Pancreas (tissue), 10 donors: ENCODE measurements at regions of chr6 and their contacts with region 1.

Region 1: GRCh38 chr6:89242574-89243330 is 25.6 kb upstream of the GABRR1 start:
- DNase-seq: peak in 1 of 6 donors; percentile 32
- ATAC-seq: peak; percentile 53 to 84 (median 76)
- H3K4me3 ChIP-seq: no peak overlapping the region
- H3K27ac ChIP-seq: no peak overlapping the region
- H3K4me1 ChIP-seq: no peaks in the 10 kb centered on the region
- H3K27me3 ChIP-seq: no peaks in the 10 kb centered on the region
- CTCF ChIP-seq: peak in 1 of 4 donors; percentile 19

Region 2: GRCh38 chr6:88989215-88989614 is 253.5 kb before region 1 on chr6:
- intact Hi-C with region 1: loop called in 2 of 3 experiments (anchors 5 kb)
- DNase-seq: peak in 3 of 6 donors; percentile 40 to 74 (median 55)
- ATAC-seq: peak; percentile 89 to 99 (median 94)
- H3K4me3 ChIP-seq: no peak overlapping the region
- H3K27ac ChIP-seq: no peak overlapping the region
- H3K4me1 ChIP-seq: peaks cover 0 to 3% (median 0%) of the 10 kb centered on the region in 3 donors
- H3K27me3 ChIP-seq: no peaks in the 10 kb centered on the region
- CTCF ChIP-seq: no peak

Region 3: GRCh38 chr6:89117211-89118108 is 125.3 kb before region 1 on chr6 and contains the start of gene SRSF12:
- intact Hi-C with region 1: loop called in 1 of 3 experiments (anchors 10 kb)
- DNase-seq: peak; percentile 18 to 82 (median 44)
- ATAC-seq: peak; percentile 81 to 89 (median 86)
- H3K4me3 ChIP-seq: peak within 1 kb of the TSS; percentile 31 to 75 (median 56)
- H3K27ac ChIP-seq: peak within 1 kb of the TSS in 2 of 4 donors; percentile 47 to 53
- H3K4me1 ChIP-seq: no peaks in the 10 kb centered on the region
- H3K27me3 ChIP-seq: no peaks in the 10 kb centered on the region
- CTCF ChIP-seq: no peak
- total RNA-seq, gene SRSF12: 0.37 to 1.6 (median 0.55) TPM

Region 4: DNA sequence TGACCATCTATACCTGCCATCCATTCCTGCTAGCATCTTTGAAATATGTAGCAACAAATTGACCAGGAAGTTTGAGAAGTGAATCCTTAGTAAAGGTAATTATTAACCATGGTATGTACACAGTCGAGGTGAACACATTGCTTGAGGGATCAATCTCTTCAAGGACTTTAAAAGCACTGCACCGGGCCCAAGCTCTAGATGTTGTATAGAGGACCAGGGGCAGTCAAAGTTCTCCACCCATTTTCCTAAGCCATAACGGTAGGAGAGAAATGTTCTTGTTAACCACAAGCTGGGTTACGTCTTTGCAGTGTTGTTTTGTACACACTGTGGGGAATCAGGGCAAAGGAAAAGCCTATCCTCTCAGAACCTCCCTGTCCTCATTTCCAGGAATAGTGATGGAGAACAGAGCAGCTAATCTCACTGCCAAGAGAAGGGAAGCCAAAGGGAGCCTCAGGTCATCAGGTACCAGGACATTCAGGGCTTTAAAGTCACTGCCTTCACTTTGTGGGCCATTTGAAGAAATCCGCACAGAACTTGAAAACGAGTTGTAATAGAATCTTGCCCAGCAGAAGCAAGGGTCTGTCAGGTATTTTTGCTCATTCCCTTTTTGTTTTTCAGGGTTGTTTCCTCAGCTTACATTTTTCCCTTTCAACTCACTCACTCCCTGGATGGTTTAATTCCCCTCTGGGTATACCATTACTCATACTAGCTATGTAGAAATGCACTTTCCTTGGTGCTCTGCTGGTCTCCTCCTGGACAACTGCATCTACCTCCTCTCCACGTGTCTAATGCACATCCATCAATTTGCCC is 102.2 kb before region 1 on chr6:
- intact Hi-C with region 1: no loop called
- DNase-seq: peak in 2 of 6 donors; percentile 14 to 30
- ATAC-seq: peak; percentile 94 to 99 (median 98)
- H3K4me3 ChIP-seq: no peak overlapping the region
- H3K27ac ChIP-seq: peak overlapping the region in 2 of 4 donors; percentile 56 to 58
- H3K4me1 ChIP-seq: peaks cover 7 to 19% (median 18%) of the 10 kb centered on the region in 3 donors
- H3K27me3 ChIP-seq: no peaks in the 10 kb centered on the region
- CTCF ChIP-seq: no peak